Activated naive CD4-positive, alpha-beta T cell treated with anti-CD3 and anti-CD28 coated beads for 36 hours (primary cell): ENCODE measurements at regions of chr20 and their contacts with region 1.

Region 1: GRCh38 chr20:330233-331149 is 5.1 kb downstream of the SOX12 start:
- DNase-seq: peak; percentile 72
- H3K4me3 Mint-ChIP-seq: no peak overlapping the region
- H3K27ac Mint-ChIP-seq: no peak overlapping the region
- H3K4me1 Mint-ChIP-seq: peaks cover 13% of the 10 kb centered on the region
- H3K27me3 Mint-ChIP-seq: no peaks in the 10 kb centered on the region

Region 2: DNA sequence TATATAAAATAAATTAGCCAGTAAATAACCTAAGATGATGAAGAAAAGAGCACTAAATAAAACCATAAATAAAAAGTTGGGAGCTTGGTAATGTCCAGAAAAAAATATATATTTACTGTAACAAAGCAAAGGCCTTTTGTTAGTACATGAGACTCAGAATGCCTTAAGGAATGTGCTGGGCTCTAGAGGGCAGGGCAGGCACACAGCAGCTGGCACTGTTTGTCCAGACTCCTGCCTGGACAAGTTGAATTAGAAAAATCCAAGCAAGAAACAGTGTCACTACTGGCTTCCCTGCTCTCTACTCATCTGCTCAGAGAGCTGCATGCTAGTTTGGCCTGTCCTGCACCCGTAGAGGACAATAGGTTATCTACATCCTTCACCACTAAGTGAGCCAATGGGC is 94.6 kb before region 1 on chr20:
- CTCF ChIA-PET with region 1: interaction called, 5 read pairs
- intact Hi-C with region 1: loop called (anchors 1 kb)
- DNase-seq: no peak
- H3K4me3 Mint-ChIP-seq: no peak overlapping the region
- H3K27ac Mint-ChIP-seq: no peak overlapping the region
- H3K4me1 Mint-ChIP-seq: peaks cover 28% of the 10 kb centered on the region
- H3K27me3 Mint-ChIP-seq: no peaks in the 10 kb centered on the region

Region 3: DNA sequence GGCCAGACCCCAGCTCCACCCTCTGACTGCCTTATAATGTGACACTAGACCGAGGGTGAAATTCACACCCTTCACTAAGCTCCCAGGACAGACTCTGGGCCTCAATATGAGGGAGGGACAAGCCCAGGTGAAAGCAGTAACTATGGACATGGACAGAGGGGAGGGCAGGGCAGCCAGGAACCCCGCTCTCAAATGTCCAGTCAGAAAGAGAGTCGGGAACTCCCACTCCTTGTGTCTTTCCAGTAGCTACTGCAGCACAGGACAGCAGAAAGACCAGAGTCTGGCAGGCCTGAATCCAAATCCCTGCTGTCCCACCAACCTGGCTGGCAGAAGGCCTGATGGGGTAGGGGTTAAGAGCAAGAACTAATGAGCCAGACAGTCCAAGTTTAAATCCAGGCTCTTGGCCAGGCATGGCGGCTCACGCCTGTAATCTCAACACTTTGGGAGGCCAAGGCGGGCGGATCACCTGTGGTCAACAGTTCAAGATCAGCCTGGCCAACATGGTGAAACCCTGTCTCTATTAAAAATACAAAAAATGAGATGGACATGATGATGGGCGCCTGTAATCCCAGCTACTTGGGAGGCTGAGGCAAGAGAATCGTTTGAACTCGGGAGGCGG is 46.2 kb before region 1 on chr20:
- CTCF ChIA-PET with region 1: interaction called, 15 read pairs
- intact Hi-C with region 1: no loop called
- DNase-seq: no peak
- H3K4me3 Mint-ChIP-seq: no peak overlapping the region
- H3K27ac Mint-ChIP-seq: no peak overlapping the region
- H3K4me1 Mint-ChIP-seq: peaks cover 2% of the 10 kb centered on the region
- H3K27me3 Mint-ChIP-seq: no peaks in the 10 kb centered on the region

Region 4: DNA sequence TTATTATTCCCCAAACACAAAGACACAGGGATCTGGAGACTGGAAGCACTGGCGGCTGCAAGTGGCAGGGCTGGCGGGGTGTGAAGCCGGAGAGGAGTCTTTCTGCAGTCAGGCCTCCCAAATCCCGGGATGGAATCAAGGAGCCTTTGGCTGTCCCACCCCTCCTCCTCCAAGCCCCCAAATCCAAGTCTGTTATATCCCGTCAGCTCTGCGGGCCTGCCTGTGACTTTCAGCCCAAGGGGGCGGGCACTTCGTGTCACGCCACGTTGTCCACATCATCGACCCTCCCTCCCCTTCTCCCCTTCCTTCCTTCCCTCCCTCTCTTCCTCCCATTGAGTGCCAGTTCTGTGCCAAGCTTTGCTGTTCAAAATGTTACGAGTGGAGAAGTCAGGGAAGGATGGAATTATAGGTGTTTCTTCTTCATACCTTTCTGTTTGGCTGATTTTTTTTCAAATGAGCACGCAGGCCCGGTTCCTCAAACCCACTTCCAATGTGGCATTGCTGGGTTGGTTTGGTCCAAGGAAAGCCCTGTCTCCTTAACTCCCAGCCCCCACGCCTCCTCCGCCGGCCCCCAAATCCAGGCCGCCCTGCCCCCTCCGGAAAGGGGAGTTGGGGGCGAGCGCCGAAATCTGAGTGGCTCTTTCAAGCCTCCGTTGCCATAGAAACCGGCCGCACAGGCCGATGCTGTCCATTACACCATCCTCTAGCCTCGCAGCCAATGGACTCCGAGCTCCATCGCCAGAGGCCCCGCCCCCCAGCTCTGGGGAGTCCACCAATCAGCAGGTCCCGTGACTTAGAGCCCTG is 20.4 kb before region 1 on chr20:
- CTCF ChIA-PET with region 1: interaction called, 10 read pairs
- intact Hi-C with region 1: loop called (anchors 1 kb)
- DNase-seq: peak; percentile 93
- H3K4me3 Mint-ChIP-seq: peak overlapping the region; percentile 74
- H3K27ac Mint-ChIP-seq: peak overlapping the region; percentile 43
- H3K4me1 Mint-ChIP-seq: peaks cover 11% of the 10 kb centered on the region
- H3K27me3 Mint-ChIP-seq: no peaks in the 10 kb centered on the region